Head of caudate nucleus (tissue), 42 donors: ENCODE measurements at regions of chr15 and their contacts with region 1.

Region 1: GRCh38 chr15:59532770-59533379 is 78.7 kb upstream of the GCNT3 start:
- DNase-seq: peak in 10 of 42 donors; percentile 16 to 57 (median 20)

Region 2: DNA sequence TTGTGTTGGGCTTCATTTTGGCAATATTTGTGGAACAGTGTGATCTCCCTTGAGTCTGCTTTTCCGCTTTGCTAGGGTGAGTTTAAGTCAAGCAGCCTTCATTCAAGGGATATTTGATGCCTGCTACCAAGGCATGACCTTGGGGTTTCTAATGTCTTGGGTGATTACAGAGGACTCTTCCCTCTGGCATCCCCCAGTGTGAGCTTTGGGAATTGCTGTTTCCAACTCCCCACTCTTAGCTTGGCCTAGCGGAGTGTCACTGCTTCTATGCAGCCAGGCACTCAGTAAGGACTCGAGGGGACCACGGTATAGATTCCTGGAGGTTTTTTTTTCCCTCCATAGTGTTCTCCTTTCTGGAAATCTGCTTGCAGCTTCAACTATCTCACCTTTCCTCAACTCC is 99.8 kb after region 1 on chr15:
- intact Hi-C with region 1: loop called (anchors 10 kb)
- DNase-seq: no peak

Region 3: DNA sequence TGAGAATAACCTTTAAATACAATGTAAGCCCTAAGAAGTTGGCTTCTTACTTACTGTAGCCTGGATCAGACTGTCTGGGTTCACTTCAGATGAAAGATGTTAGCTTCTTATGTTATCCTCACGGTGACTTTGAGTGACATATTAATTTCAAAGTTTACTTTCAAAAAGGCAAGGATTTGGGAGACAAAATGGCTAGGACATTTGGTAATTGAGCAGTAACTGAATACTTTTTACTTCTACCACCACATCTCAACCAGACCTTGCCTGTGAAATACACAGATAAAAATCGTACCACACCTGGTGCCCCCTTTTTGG is 192.3 kb after region 1 on chr15:
- intact Hi-C with region 1: no loop called
- DNase-seq: no peak